Mammary epithelial cell (primary cell): ENCODE measurements at regions of chr21 and their contacts with region 1.

Region 1: GRCh38 chr21:42276526-42277154 is 38.6 kb downstream of the TFF3 start:
- DNase-seq: no peak
- H3K4me3 ChIP-seq: no peak overlapping the region
- H3K27ac ChIP-seq: no peak overlapping the region
- H3K4me1 ChIP-seq: no peaks in the 10 kb centered on the region
- H3K27me3 ChIP-seq: peaks cover 2% of the 10 kb centered on the region
- CTCF ChIP-seq: peak; percentile 1 to 14

Region 2: DNA sequence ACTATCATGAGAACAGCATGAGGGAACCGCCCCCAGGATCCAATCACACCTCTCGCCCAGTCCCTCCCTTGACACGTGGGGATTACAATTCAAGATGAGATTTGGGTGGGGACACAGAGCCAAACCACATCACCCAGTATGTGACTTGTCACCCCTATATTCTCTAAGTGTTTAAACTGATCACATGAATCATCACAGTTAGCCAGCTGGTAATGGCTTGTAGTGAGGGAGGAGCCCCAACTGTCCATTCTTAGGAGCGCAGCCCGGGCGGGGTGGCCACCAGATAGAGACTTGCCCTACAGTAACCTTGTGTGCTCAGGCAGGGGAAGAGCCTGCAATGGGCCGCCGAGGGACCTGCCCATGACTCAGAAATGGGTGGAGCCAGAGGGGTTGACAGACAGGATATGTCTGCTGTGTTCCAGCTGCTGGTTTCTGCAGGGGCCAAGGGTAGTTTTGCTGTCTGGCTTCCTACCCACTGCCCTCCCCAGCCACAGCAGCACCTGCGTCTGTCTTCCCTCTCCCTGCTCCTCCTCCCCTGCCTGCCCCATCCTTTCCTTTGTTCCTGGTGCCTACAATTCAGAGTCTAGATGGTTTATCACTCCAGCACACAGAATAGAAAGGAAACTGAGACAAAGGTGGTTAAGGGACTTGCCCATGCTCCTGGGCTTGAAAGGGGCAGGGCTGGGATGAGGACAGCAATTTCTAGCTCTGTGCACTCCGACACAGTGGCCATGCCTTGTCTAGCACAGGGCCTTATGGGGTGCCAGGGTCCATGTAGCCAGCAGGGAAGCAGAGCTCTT is 48.5 kb before region 1 on chr21:
- CTCF ChIA-PET with region 1: interaction called, 14 read pairs
- dilution Hi-C with region 1: no loop called
- in situ Hi-C with region 1: no loop called
- intact Hi-C with region 1: no loop called
- DNase-seq: peak; percentile 95
- H3K4me3 ChIP-seq: no peak overlapping the region
- H3K27ac ChIP-seq: peak overlapping the region; percentile 5
- H3K4me1 ChIP-seq: peaks cover 17% of the 10 kb centered on the region
- H3K27me3 ChIP-seq: no peaks in the 10 kb centered on the region
- CTCF ChIP-seq: peak in 1 of 2 donors; percentile 6

Region 3: GRCh38 chr21:42258153-42258884 is 18.3 kb before region 1 on chr21:
- CTCF ChIA-PET with region 1: no interaction called
- dilution Hi-C with region 1: no loop called
- in situ Hi-C with region 1: no loop called
- intact Hi-C with region 1: no loop called
- DNase-seq: peak; percentile 31
- H3K4me3 ChIP-seq: no peak overlapping the region
- H3K27ac ChIP-seq: no peak overlapping the region
- H3K4me1 ChIP-seq: no peaks in the 10 kb centered on the region
- H3K27me3 ChIP-seq: no peaks in the 10 kb centered on the region
- CTCF ChIP-seq: peak; percentile 73 to 91

Region 4: DNA sequence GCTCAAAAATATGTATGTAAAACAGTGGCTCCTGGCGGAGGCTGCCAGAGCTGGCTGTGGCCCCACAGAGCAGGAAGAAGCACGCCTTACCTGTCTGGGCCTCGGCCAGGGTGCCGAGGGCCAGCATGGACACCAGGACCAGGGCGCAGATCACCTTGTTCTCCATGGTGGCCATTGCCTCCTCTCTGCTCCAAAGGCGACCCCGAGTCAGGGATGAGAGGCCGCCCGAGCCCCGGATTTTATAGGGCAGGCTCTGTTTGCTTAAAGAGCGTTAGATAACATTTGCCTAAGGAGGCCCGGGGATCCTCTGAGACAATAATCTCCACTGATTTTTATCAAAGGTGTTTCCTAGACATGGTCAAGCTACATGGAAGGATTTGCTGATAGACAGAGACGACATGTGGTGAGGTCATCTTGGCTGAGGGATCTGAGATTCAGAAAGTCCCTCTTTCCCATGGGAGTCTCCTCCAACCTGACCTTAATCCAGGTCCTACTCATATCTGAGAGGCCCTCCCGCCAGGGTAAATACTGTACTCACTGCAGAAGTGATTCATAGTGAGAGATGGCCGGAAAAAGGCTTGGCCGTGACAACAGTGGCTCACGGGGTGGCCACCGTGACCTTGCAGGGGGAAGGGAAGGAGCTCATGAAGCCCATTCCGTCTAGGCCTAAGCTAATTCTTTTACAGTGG is 89.8 kb after region 1 on chr21 and contains the start of gene TFF1:
- CTCF ChIA-PET with region 1: no interaction called
- dilution Hi-C with region 1: no loop called
- in situ Hi-C with region 1: no loop called
- intact Hi-C with region 1: no loop called
- DNase-seq: no peak
- H3K4me3 ChIP-seq: no peak within 1 kb of the TSS
- H3K27ac ChIP-seq: no peak within 1 kb of the TSS
- H3K4me1 ChIP-seq: no peaks in the 10 kb centered on the region
- H3K27me3 ChIP-seq: no peaks in the 10 kb centered on the region
- CTCF ChIP-seq: no peak
- total RNA-seq, gene TFF1: not detected